PC-9 (cell line): ENCODE measurements at regions of chr2 and their contacts with region 1.

Region 1: DNA sequence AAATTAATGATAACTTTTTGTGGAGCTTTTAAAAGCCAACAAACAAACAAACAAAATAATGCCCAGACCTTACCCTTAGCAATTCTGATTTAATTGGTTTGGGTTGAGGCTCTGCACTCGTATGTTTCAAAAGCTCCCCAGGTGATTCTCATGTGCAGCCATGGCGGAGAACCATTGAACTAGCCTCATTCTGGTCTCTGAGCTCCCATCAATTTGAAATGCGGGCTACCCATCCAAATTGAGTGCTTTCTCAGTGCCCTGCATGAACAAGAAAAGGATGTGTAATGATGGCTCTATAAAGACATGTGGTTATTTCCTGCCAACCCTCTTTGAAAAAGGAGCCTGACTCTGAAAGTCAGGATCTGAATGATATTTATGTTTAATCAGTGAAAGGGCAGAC is 8.2 kb downstream of the MXD1 start:
- DNase-seq: no peak
- H3K4me3 ChIP-seq: no peak overlapping the region
- H3K27ac ChIP-seq: no peak overlapping the region
- H3K4me1 ChIP-seq: peaks cover 25% of the 10 kb centered on the region
- H3K27me3 ChIP-seq: no peaks in the 10 kb centered on the region
- CTCF ChIP-seq: no peak

Region 2: DNA sequence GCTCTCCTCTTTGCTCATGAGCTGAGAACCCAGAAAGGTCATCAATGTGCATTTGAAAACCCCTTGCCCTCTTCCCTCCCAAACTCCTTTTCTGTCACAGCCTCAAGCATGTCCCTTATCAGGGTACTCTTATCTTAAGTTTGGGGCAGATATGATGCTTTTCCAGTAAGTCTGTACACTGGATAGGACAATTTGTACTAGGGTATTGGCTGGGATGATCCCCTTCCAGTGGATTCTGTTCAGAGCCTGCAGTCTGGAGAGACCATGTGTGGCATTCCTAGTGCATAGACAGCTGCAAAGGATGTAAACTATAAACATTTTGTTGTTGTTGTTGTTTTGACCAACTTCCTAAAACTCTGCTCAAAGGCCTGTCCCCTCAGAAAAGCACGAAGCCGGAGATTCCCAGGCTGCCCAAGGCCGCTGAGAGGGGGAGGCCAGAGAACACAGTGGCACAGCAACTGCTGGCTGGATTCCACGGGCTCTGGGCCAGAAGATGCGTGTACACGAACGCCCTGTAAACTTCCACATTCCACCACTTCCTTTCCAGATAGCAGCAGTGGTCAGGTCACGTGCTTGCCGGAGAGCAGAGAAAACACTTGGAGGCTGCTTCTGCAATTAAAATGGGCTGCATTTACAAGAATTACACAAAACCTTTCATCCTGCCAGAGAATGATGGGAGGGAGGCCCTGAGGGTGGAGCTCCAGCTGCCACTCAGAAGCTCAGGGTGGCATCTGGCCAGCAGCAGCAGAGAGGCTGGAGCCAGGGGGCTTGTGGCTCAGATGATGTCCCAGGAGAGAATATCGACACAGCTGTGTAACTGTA is 1094.0 kb before region 1 on chr2:
- CTCF ChIA-PET with region 1: no interaction called
- POLR2A ChIA-PET with region 1: no interaction called
- intact Hi-C with region 1: no loop called
- DNase-seq: peak in 1 of 2 experiments; percentile 79
- H3K4me3 ChIP-seq: no peak overlapping the region
- H3K27ac ChIP-seq: no peak overlapping the region
- H3K4me1 ChIP-seq: no peaks in the 10 kb centered on the region
- H3K27me3 ChIP-seq: no peaks in the 10 kb centered on the region
- CTCF ChIP-seq: no peak

Region 3: DNA sequence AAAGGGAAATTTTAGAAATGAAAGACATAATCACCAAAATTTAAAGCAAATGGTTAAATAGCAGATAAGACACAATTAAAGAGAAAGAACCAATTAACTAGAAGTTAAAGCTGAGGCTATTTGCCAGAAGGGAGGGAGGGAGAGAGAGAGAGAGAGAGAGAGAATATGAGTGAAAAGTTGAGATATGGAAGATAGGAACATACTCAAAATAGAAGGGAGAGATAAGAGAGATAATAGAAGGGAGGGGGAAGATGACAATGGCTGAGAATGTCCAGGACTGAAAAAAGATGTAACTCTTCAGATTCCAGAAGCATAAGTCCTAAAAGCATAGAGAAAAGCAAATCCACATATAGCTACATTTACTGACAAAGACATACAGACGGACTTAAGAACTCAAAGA is 262.5 kb before region 1 on chr2:
- CTCF ChIA-PET with region 1: no interaction called
- POLR2A ChIA-PET with region 1: no interaction called
- intact Hi-C with region 1: no loop called
- DNase-seq: no peak
- H3K4me3 ChIP-seq: no peak overlapping the region
- H3K27ac ChIP-seq: no peak overlapping the region
- H3K4me1 ChIP-seq: no peaks in the 10 kb centered on the region
- H3K27me3 ChIP-seq: no peaks in the 10 kb centered on the region
- CTCF ChIP-seq: no peak

Region 4: GRCh38 chr2:70009762-70010575 is 86.9 kb after region 1 on chr2:
- CTCF ChIA-PET with region 1: no interaction called
- POLR2A ChIA-PET with region 1: interaction called, 12 read pairs
- intact Hi-C with region 1: no loop called
- DNase-seq: peak in 1 of 2 experiments; percentile 44
- H3K4me3 ChIP-seq: no peak overlapping the region
- H3K27ac ChIP-seq: no peak overlapping the region
- H3K4me1 ChIP-seq: 0 out of 2 replicates have a peak, but pooled peaks cover 11% of the 10 kb centered on the region
- H3K27me3 ChIP-seq: no peaks in the 10 kb centered on the region
- CTCF ChIP-seq: no peak